WTC11 (cell line): ENCODE measurements at regions of chr11 and their contacts with region 1.

Region 1: GRCh38 chr11:43567396-43567975 is 113.1 kb upstream of the HSD17B12 start:
- DNase-seq: no peak
- ATAC-seq: peak; percentile 88
- H3K4me3 Mint-ChIP-seq: no peak overlapping the region
- H3K27ac Mint-ChIP-seq: no peak overlapping the region
- H3K4me1 Mint-ChIP-seq: no peaks in the 10 kb centered on the region
- H3K27me3 Mint-ChIP-seq: peaks cover 57% of the 10 kb centered on the region
- CTCF ChIP-seq: peak; percentile 61; the same call in 1 of the 2 replicates

Region 2: GRCh38 chr11:43521471-43521870 is 46.0 kb before region 1 on chr11:
- CTCF ChIA-PET with region 1: interaction called, 112 read pairs
- POLR2A ChIA-PET with region 1: no interaction called
- DNase-seq: no peak
- ATAC-seq: no peak
- H3K4me3 Mint-ChIP-seq: no peak overlapping the region
- H3K27ac Mint-ChIP-seq: no peak overlapping the region
- H3K4me1 Mint-ChIP-seq: no peaks in the 10 kb centered on the region
- H3K27me3 Mint-ChIP-seq: peaks cover 40% of the 10 kb centered on the region
- CTCF ChIP-seq: no peak